Ascending aorta (tissue), 2 donors: ENCODE measurements at regions of chr9 and their contacts with region 1.

Region 1: DNA sequence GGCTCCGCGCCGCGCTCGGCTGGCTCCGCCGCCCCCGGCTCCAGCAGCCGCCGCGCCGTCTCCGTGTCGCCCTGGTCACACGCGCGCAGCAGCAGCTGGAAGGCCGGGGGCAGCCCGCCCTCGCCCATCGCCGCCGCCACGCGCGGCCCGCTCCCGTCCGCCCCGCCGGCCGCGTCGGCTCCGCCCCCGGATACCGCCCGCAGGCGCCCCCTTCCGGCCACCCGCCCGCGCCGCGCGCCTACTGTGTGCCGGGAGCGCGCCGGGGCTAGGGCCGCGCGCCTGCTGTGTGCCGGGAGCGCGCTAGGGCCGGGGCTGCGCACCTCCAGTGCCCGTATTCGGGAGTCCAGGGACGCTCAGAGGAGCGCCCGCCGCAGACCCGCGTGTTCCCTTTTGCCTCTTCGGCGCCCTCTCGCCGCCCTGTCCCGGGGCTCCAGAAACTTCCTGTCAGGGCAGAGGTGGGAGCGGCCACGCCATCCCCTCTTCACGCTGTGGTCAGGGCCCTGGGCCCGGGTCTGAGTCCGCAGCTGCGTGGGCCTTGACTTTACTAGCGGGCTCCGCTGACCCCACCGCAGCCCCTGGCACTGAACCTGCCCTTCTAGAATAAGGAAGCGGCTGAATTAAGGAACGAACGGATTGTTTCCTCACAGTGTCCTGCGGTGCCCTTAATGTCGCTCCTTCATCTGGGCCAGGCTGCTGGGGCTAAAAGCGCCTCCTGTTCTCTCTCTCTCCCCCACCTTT is at the start of gene ANKS6:
- DNase-seq: peak; percentile 19 to 89
- H3K4me3 ChIP-seq: peak within 1 kb of the TSS; percentile 72
- H3K27ac ChIP-seq: peak within 1 kb of the TSS; percentile 67 to 70
- H3K4me1 ChIP-seq: peaks cover 0 to 10% of the 10 kb centered on the region in 2 donors
- H3K27me3 ChIP-seq: no peaks in the 10 kb centered on the region
- CTCF ChIP-seq: peak in 1 of 3 experiments; percentile 79
- total RNA-seq, gene ANKS6: 13.0 TPM

Region 2: DNA sequence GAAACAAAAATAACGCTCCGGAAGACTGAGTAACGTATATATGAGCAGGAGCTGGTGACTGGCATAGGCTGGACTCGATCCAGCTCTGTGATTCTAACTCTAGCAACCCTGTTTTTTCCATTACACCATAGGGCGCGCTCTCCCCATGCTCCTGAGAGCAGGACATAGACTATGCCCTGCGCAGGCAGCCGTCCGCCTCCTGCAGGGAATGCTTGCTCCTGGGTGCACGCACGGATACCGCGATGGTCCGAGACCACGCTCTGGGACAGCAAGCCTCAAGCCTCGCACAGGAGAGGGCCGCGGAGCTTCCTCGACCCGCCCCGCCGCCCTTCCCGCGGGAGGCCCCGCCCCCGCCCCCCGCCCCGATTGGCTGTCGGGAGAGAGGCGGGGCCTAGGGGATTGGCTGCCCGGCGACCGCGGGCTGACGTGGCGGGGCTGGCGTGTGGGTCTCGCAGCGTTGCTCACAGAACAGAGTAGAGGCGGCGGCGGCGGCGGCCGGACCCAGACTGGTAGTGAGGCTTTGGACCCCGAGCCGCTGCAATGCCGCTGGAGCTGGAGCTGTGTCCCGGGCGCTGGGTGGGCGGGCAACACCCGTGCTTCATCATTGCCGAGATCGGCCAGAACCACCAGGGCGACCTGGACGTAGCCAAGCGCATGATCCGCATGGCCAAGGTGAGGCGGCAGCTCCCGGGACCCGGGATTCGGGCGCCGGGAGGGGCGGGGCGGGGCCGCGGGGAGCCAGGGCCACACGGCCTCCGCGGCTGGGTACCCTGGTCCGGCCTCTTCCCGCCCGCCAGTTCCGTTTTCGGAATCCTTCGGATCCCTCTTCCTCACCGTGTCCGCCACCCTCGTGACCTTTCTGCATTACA is 740.0 kb before region 1 on chr9 and contains the start of gene NANS:
- intact Hi-C with region 1: loop called (anchors 10 kb)
- DNase-seq: peak; percentile 80 to 96
- H3K4me3 ChIP-seq: peak within 1 kb of the TSS; percentile 86 to 96
- H3K27ac ChIP-seq: peak within 1 kb of the TSS; percentile 95 to 98
- H3K4me1 ChIP-seq: peaks cover 0 to 10% of the 10 kb centered on the region in 2 donors
- H3K27me3 ChIP-seq: no peaks in the 10 kb centered on the region
- CTCF ChIP-seq: no peak
- total RNA-seq, gene NANS: 40.7 TPM

Region 3: GRCh38 chr9:98989036-98990000 is 192.8 kb after region 1 on chr9:
- intact Hi-C with region 1: loop called (anchors 2 kb)
- DNase-seq: peak; percentile 81 to 98
- H3K4me3 ChIP-seq: no peak overlapping the region
- H3K27ac ChIP-seq: peak overlapping the region; percentile 81 to 82
- H3K4me1 ChIP-seq: peaks cover 18 to 29% of the 10 kb centered on the region in 2 donors
- H3K27me3 ChIP-seq: no peaks in the 10 kb centered on the region
- CTCF ChIP-seq: peak; percentile 27 to 44 (median 36)

Region 4: GRCh38 chr9:100098887-100099721 is 1302.6 kb after region 1 on chr9 and contains the starts of genes ERP44 and INVS:
- intact Hi-C with region 1: loop called (anchors 10 kb)
- DNase-seq: peak; percentile 98 to 100
- H3K4me3 ChIP-seq: peak within 1 kb of the TSS; percentile 62 to 77
- H3K27ac ChIP-seq: peak within 1 kb of the TSS; percentile 79 to 81
- H3K4me1 ChIP-seq: peaks cover 0 to 16% of the 10 kb centered on the region in 2 donors
- H3K27me3 ChIP-seq: no peaks in the 10 kb centered on the region
- CTCF ChIP-seq: no peak
- total RNA-seq, gene ERP44: 10.7 TPM
- total RNA-seq, gene INVS: 8.5 TPM